CD4-positive, alpha-beta memory T cell (primary cell): ENCODE measurements at regions of chr4 and their contacts with region 1.

Region 1: GRCh38 chr4:56655209-56655626 is 25.9 kb downstream of the HOPX start:
- DNase-seq: peak in 2 of 5 donors; percentile 22 to 24
- H3K4me3 ChIP-seq: peak overlapping the region in 1 of 2 donors; percentile 51
- H3K4me3 Mint-ChIP-seq: peak overlapping the region; percentile 81 to 96 (median 92)
- H3K27ac ChIP-seq: peak overlapping the region; percentile 51
- H3K27ac Mint-ChIP-seq: peak overlapping the region; percentile 19 to 95 (median 72)
- H3K4me1 ChIP-seq: peaks cover 57% of the 10 kb centered on the region
- H3K4me1 Mint-ChIP-seq: peaks cover 39 to 78% (median 62%) of the 10 kb centered on the region in 4 donors
- H3K27me3 ChIP-seq: peaks cover 5% of the 10 kb centered on the region
- H3K27me3 Mint-ChIP-seq: peaks cover 6 to 13% of the 10 kb centered on the region in 2 donors

Region 2: GRCh38 chr4:56575820-56576429 is 79.3 kb before region 1 on chr4:
- CTCF ChIA-PET with region 1: interaction called, 3 read pairs
- POLR2A ChIA-PET with region 1: interaction called, 3 read pairs
- intact Hi-C with region 1: loop called (anchors 10 kb)
- DNase-seq: peak in 4 of 5 donors; percentile 10 to 23 (median 13)
- H3K4me3 ChIP-seq: no peak overlapping the region
- H3K4me3 Mint-ChIP-seq: no peak overlapping the region
- H3K27ac ChIP-seq: no peak overlapping the region
- H3K27ac Mint-ChIP-seq: no peak overlapping the region
- H3K4me1 ChIP-seq: no peaks in the 10 kb centered on the region
- H3K4me1 Mint-ChIP-seq: peaks cover 0 to 2% (median 0%) of the 10 kb centered on the region in 4 donors
- H3K27me3 ChIP-seq: no peaks in the 10 kb centered on the region
- H3K27me3 Mint-ChIP-seq: peaks cover 7 to 8% of the 10 kb centered on the region in 2 donors